GM10248 (cell line): ENCODE measurements at regions of chr18 and their contacts with region 1.

Region 1: DNA sequence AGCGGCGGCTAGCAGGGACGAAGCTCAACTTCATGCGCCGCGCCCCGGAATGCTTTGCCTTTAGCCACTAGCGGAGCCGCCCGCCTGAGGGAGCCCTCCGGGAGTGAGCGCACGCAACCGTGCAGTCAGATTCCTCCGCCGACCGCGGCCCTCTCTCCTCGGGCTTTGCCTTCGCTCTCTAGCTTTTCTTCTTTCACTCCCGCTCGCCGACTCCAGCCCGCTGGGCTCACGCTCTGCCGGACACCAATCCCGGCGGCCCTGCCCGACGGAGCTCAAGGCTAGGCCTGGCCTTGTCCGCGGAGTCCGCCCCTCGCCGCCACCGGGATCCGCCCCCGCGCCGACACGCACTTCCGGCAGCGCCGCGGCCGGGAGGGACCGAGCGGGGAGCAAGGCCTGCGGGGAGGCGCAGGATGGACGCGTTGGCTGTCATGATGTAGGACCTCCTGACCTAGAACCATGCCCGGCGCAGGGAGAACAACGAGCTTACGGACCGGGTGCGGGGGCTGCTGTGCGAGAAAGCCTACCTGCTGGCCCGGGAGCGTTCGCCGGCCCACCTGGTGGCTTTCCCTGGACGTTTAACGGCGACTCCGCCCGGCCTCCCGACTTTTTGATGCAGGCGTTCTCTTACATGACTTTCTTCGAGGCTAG is 40.8 kb upstream of the AKAIN1 start:
- DNase-seq: peak; percentile 88
- CTCF ChIP-seq: no peak

Region 2: GRCh38 chr18:5253910-5254309 is 16.1 kb after region 1 on chr18:
- CTCF ChIA-PET with region 1: interaction called, 12 read pairs
- POLR2A ChIA-PET with region 1: no interaction called
- DNase-seq: no peak
- CTCF ChIP-seq: no peak

Region 3: DNA sequence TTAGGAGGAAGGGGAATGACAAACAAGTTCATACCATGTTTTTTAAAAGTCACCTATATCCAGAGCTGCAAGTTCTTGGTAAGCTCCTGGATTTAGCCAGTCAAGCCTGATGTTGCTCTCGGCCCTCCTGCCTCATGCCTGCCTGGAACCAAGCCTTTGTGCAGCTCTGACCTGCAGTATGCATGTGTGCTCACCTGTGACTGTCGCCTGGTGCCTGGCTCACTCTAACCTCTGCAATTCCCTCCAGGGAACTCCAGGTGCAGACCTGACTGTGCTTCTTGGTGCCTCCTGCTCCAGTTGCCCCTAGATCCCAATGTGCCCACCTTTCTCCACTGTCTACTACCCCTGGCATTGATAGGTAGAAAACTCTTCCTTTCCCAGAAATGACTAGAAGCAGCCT is 142.7 kb after region 1 on chr18:
- CTCF ChIA-PET with region 1: no interaction called
- POLR2A ChIA-PET with region 1: no interaction called
- DNase-seq: no peak
- CTCF ChIP-seq: no peak